ENCODE measurements at regions of chr14 and their contacts with region 1.

Region 1: GRCh38 chr14:75002392-75003249 is at the start of gene EIF2B2:
- DNase-seq: peak; percentile 97 to 99 (median 98)
- H3K4me3 ChIP-seq: peak within 1 kb of the TSS; percentile 71 to 100 (median 93)
- H3K27ac ChIP-seq: peak within 1 kb of the TSS in 58 of 59 donors; percentile 41 to 97 (median 88)
- H3K27me3 ChIP-seq: no peaks in the 10 kb centered on the region
- CTCF ChIP-seq: peak in 46 of 56 donors; percentile 6 to 56 (median 36)
- total RNA-seq, gene EIF2B2: 25.4 to 55.5 (median 38.0) TPM

Region 2: DNA sequence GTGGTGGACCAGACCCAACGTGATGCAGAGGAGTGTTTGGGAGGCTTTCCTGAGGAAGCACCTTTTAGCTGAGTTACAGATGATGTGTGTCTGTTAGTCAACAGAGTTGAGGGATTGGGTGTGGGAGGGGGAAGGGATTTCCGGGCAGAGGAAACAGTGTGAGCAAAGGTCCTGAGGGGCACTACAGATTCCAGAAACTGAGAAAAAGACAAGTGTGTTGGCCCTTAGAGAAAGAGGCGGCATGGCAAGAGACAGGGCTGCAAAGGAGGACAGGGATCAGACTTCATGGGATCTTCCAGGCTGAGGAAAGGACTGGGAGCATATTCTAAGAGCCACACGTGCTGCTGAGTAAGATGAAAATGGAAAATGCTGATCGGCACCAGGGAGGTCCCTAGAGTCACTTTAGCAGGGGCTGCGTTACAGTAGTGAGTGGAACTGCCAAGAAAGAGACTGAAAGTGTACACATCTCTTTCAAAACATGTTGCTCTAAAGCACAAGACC is 70.2 kb before region 1 on chr14:
- intact Hi-C with region 1: no loop called
- DNase-seq: no peak
- H3K4me3 ChIP-seq: no peak overlapping the region
- H3K27ac ChIP-seq: no peak overlapping the region
- H3K27me3 ChIP-seq: no peaks in the 10 kb centered on the region
- CTCF ChIP-seq: no peak

Region 3: GRCh38 chr14:74945823-74946682 is 56.6 kb before region 1 on chr14:
- intact Hi-C with region 1: loop called (anchors 5 kb)
- DNase-seq: peak in 9 of 10 donors; percentile 63 to 82 (median 73)
- H3K4me3 ChIP-seq: peak overlapping the region in 20 of 59 donors; percentile 0 to 40 (median 18)
- H3K27ac ChIP-seq: peak overlapping the region in 33 of 59 donors; percentile 0 to 76 (median 50)
- H3K27me3 ChIP-seq: peaks cover 0 to 7% (median 0%) of the 10 kb centered on the region in 45 donors
- CTCF ChIP-seq: peak; percentile 53 to 95 (median 91)

Region 4: GRCh38 chr14:75050852-75051554 is 48.4 kb after region 1 on chr14 and contains the start of gene MLH3:
- intact Hi-C with region 1: loop called in 1 of 2 experiments (anchors 5 kb)
- DNase-seq: peak; percentile 68 to 90 (median 80)
- H3K4me3 ChIP-seq: peak within 1 kb of the TSS; percentile 59 to 86 (median 77)
- H3K27ac ChIP-seq: peak within 1 kb of the TSS; percentile 60 to 97 (median 91)
- H3K27me3 ChIP-seq: no peaks in the 10 kb centered on the region
- CTCF ChIP-seq: peak in 36 of 56 donors; percentile 6 to 55 (median 27)
- total RNA-seq, gene MLH3: 31.8 to 59.8 (median 43.1) TPM

Region 5: DNA sequence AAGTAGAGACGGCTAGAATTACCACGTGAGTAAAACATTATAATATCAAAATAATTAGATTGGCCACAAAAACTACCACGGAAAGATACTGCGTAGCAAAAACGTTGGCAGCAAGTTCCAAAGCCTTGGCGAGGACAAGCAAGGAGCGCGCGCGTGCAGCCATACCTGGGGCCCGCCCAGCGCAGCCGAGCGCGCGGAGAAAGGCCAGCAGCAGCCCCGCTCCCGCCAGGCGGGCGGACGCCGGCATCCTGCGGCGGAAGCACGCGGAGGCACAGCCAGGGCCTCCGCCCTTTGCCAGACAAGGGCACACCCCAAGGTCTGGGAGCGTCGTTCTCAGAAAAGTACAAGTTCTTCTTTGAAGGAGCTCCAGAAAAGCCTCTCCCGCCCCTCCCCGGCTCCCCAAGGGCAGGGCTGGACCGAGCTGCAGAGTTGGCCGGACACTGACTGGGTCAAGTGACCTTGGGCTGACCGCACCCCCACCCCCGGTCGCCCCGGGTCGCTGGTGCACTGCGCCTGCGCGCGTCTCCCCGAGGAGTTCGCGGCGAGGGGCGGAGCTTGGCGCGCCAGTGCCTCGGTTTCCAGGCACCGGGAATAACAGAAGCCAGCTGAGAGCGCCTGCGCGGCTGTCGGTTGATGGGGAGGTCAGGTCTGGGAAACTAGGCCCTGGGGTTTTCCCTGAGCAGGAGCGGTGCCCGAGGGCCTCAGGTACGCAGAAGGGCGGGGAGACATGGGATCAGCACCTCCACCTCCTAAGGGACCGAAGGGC is 66.6 kb after region 1 on chr14 and contains the start of gene ZC2HC1C:
- intact Hi-C with region 1: loop called (anchors 5 kb)
- DNase-seq: peak; percentile 90 to 98 (median 94)
- H3K4me3 ChIP-seq: peak within 1 kb of the TSS; percentile 50 to 95 (median 80)
- H3K27ac ChIP-seq: peak within 1 kb of the TSS; percentile 54 to 99 (median 93)
- H3K27me3 ChIP-seq: no peaks in the 10 kb centered on the region
- CTCF ChIP-seq: peak in 26 of 56 donors; percentile 4 to 38 (median 22)
- total RNA-seq, gene ZC2HC1C: 3.8 to 18.1 (median 7.8) TPM